ENCODE measurements at regions of chr5 and their contacts with region 1.

Region 1: DNA sequence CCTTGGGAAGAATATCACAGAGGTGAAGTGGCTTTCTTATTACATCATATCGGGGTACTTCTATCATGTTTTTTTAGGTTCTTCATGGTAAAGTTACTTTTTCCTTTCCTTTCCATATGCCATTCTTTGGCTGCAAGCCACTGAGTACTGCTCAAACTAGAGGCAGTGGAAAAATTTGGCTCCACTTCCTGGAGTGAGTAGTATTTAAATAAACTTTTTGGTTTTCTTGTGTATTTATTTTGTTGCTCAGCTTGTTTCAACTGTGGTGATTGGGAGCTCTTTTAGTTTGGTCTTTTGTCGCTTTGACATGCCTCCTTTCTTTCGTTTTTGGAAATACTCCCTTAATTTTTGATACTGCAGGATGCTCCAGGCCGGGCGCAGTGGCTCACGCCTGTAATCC is 69.8 kb downstream of the WDR70 start:
- DNase-seq: no peak
- H3K4me3 Mint-ChIP-seq: no peak overlapping the region
- H3K27ac Mint-ChIP-seq: no peak overlapping the region
- H3K4me1 Mint-ChIP-seq: peaks cover 5% of the 10 kb centered on the region
- H3K27me3 Mint-ChIP-seq: no peaks in the 10 kb centered on the region

Region 2: GRCh38 chr5:36882250-36882649 is 566.7 kb before region 1 on chr5:
- CTCF ChIA-PET with region 1: no interaction called
- intact Hi-C with region 1: loop called (anchors 10 kb)
- DNase-seq: no peak
- H3K4me3 Mint-ChIP-seq: no peak overlapping the region
- H3K27ac Mint-ChIP-seq: peak overlapping the region; percentile 4
- H3K4me1 Mint-ChIP-seq: peaks cover 54% of the 10 kb centered on the region
- H3K27me3 Mint-ChIP-seq: no peaks in the 10 kb centered on the region